Gastrocnemius medialis (tissue), 4 donors: ENCODE measurements at regions of chr2 and their contacts with region 1.

Region 1: GRCh38 chr2:73385595-73386341 is at the start of gene ALMS1:
- DNase-seq: peak; percentile 68 to 84
- ATAC-seq: peak; percentile 91
- H3K4me3 ChIP-seq: peak within 1 kb of the TSS; percentile 81 to 97 (median 92)
- H3K27ac ChIP-seq: peak within 1 kb of the TSS; percentile 88 to 96 (median 91)
- H3K4me1 ChIP-seq: peaks cover 12 to 23% of the 10 kb centered on the region in 2 donors
- H3K27me3 ChIP-seq: no peaks in the 10 kb centered on the region
- CTCF ChIP-seq: peak in 3 of 5 experiments; percentile 13 to 53 (median 33)
- POLR2A ChIP-seq: peak in 1 of 2 donors; percentile 26
- total RNA-seq, gene ALMS1: 10.0 to 18.1 (median 13.9) TPM

Region 2: GRCh38 chr2:73071360-73072133 is 314.2 kb before region 1 on chr2 and contains the start of gene SFXN5:
- in situ Hi-C with region 1: no loop called
- intact Hi-C with region 1: loop called (anchors 5 kb)
- DNase-seq: peak; percentile 98
- ATAC-seq: peak; percentile 84 to 90
- H3K4me3 ChIP-seq: peak within 1 kb of the TSS; percentile 83 to 93 (median 92)
- H3K27ac ChIP-seq: peak within 1 kb of the TSS; percentile 87 to 97 (median 92)
- H3K4me1 ChIP-seq: peaks cover 19 to 48% of the 10 kb centered on the region in 2 donors
- H3K27me3 ChIP-seq: no peaks in the 10 kb centered on the region
- CTCF ChIP-seq: peak in 2 of 5 experiments; percentile 32 to 35
- POLR2A ChIP-seq: peak; percentile 24 to 59
- total RNA-seq, gene SFXN5: 6.8 to 22.7 (median 9.1) TPM

Region 3: GRCh38 chr2:73588177-73588576 is 202.4 kb after region 1 on chr2:
- in situ Hi-C with region 1: no loop called
- intact Hi-C with region 1: no loop called
- DNase-seq: no peak
- ATAC-seq: no peak
- H3K4me3 ChIP-seq: no peak overlapping the region
- H3K27ac ChIP-seq: no peak overlapping the region
- H3K4me1 ChIP-seq: no peaks in the 10 kb centered on the region
- H3K27me3 ChIP-seq: no peaks in the 10 kb centered on the region
- CTCF ChIP-seq: no peak
- POLR2A ChIP-seq: no peak